ENCODE measurements at regions of chr13 and their contacts with region 1.

Region 1: GRCh38 chr13:66138172-66138811 is 1091.8 kb downstream of the PCDH9 start:
- DNase-seq: no peak
- ATAC-seq: peak; percentile 87
- H3K4me3 Mint-ChIP-seq: peak overlapping the region; percentile 39
- H3K27ac Mint-ChIP-seq: peak overlapping the region; percentile 54
- H3K4me1 Mint-ChIP-seq: peaks cover 29% of the 10 kb centered on the region
- H3K27me3 Mint-ChIP-seq: no peaks in the 10 kb centered on the region
- CTCF ChIP-seq: no peak

Region 2: DNA sequence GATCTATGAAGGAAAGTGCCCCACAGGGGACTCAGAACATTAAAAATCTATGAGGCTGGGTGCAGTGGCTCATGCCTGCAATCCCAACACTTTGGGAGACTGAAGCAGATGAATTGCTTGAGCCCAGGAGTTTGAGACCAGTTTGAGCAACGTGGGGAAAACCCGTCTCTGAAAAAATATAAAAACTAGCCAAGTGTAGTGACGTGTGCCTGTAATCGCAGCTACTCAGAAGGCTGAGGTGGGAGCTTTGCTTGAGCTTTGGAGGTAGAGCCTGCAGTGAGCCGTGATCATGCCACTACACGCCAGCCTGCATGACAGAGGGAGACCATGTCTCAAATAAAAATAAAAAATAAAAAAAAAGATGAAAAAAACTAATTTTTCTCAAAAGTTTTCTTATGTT is 21.2 kb after region 1 on chr13:
- CTCF ChIA-PET with region 1: no interaction called
- POLR2A ChIA-PET with region 1: no interaction called
- intact Hi-C with region 1: no loop called
- DNase-seq: no peak
- ATAC-seq: no peak
- H3K4me3 Mint-ChIP-seq: no peak overlapping the region
- H3K27ac Mint-ChIP-seq: no peak overlapping the region
- H3K4me1 Mint-ChIP-seq: peaks cover 5% of the 10 kb centered on the region
- H3K27me3 Mint-ChIP-seq: no peaks in the 10 kb centered on the region
- CTCF ChIP-seq: no peak

Region 3: GRCh38 chr13:66635526-66635925 is 497.2 kb after region 1 on chr13:
- CTCF ChIA-PET with region 1: no interaction called
- POLR2A ChIA-PET with region 1: no interaction called
- intact Hi-C with region 1: loop called (anchors 10 kb)
- DNase-seq: no peak
- ATAC-seq: no peak
- H3K4me3 Mint-ChIP-seq: no peak overlapping the region
- H3K27ac Mint-ChIP-seq: no peak overlapping the region
- H3K4me1 Mint-ChIP-seq: peaks cover 22% of the 10 kb centered on the region
- H3K27me3 Mint-ChIP-seq: no peaks in the 10 kb centered on the region
- CTCF ChIP-seq: no peak

Measured in activated B cell treated with CpG ODN at 0.5 μM for 24 hours (primary cell).